ENCODE measurements at regions of chr19 and their contacts with region 1.

Region 1: DNA sequence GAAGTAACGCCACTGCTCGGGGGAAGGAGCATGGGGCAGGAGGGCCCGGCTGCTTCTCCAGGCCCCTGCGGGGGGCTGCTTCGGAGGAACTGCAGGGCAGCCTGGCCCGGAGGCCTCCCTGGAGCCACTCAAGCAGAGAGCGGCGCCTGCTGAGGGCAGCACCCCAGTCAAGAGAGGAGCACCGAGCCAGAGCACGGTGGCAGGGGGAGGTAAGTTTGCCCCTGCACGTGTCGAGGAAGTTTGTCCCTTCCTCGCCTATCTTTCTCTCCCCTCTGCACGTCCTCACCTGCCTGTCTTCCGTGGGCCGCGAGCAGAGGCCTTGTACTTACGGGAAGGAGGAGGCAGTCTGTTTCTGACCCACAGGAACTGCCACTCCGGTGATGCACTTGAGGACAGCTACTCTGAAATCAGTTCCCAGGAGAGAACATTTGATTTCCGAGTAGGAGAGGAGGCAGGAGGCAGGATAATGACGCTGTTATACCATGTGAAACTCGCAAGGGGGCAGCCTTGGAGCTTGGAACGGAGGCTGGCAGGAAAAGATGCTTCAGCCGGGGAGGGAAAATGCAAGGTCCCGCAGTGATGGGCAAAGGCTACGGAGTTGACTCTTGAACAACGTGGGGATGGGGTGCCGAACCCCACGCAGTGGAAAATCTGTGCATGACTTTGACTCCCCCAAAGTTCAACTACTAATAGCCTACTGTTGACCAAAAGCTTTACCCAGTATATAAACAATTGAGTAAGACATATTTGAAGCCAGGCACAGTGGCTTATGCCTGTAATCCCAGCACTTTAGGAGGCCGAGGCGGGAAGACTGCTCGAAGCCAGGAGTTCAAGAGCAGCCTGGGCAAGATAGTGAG is 5.0 kb downstream of the FFAR1 start:
- DNase-seq: peak; percentile 76
- ATAC-seq: peak; percentile 84
- H3K4me3 Mint-ChIP-seq: no peak overlapping the region
- H3K27ac Mint-ChIP-seq: peak overlapping the region; percentile 95
- H3K4me1 Mint-ChIP-seq: peaks cover 5% of the 10 kb centered on the region
- H3K27me3 Mint-ChIP-seq: no peaks in the 10 kb centered on the region
- CTCF ChIP-seq: peak; percentile 58; the same call in 1 of the 2 replicates

Region 2: DNA sequence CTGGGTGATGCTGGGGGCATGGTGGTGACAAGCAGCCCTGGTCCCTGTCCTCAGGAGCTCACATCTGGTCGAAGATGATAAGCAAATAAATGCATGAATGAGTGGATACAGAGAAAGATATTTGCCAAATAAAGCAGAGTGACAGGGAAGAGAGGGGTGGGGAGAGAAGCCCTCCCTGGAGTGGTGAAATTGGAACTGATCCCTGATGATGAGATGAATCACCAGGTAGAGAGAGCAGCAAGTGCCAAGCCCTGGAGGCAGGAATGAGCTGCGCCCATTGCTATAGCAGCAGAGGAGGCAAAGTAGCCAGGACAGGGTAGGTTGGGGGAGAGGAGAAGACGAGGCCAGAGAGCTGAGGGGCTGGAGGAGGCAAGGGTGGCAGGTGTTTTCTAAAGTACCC is 184.5 kb before region 1 on chr19:
- CTCF ChIA-PET with region 1: no interaction called
- POLR2A ChIA-PET with region 1: no interaction called
- DNase-seq: no peak
- ATAC-seq: no peak
- H3K4me3 Mint-ChIP-seq: no peak overlapping the region
- H3K27ac Mint-ChIP-seq: no peak overlapping the region
- H3K4me1 Mint-ChIP-seq: no peaks in the 10 kb centered on the region
- H3K27me3 Mint-ChIP-seq: no peaks in the 10 kb centered on the region
- CTCF ChIP-seq: no peak

Region 3: GRCh38 chr19:35306473-35307246 is 46.0 kb before region 1 on chr19:
- CTCF ChIA-PET with region 1: interaction called, 10 read pairs
- POLR2A ChIA-PET with region 1: no interaction called
- DNase-seq: peak; percentile 52
- ATAC-seq: peak; percentile 87
- H3K4me3 Mint-ChIP-seq: no peak overlapping the region
- H3K27ac Mint-ChIP-seq: no peak overlapping the region
- H3K4me1 Mint-ChIP-seq: no peaks in the 10 kb centered on the region
- H3K27me3 Mint-ChIP-seq: no peaks in the 10 kb centered on the region; the same call in 1 of the 2 replicates
- CTCF ChIP-seq: peak; percentile 37; the same call in 1 of the 2 replicates

Region 4: DNA sequence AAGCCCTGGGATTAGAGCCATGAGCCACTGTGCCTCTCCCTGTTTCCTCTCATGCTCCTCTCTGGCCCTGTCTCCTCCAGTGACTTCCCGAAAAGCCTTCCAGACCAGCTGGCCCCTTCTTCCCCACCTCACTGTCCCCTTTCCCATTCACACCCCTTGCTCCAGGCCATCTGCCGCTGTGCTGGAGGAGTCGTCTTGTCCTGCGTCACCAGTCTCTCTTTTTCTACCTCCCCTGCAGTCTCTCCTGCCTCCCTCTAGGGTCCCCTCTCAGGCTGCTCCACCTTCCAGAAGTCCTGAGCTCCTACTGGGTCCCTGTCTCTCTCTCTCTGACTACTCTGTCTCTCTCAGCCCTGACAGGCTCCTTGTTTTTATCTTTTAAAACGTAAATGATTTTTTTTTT is 10.2 kb before region 1 on chr19:
- CTCF ChIA-PET with region 1: interaction called, 12 read pairs
- POLR2A ChIA-PET with region 1: no interaction called
- DNase-seq: no peak
- ATAC-seq: peak; percentile 52
- H3K4me3 Mint-ChIP-seq: no peak overlapping the region
- H3K27ac Mint-ChIP-seq: no peak overlapping the region
- H3K4me1 Mint-ChIP-seq: 0 out of 2 replicates have a peak, but pooled peaks cover 2% of the 10 kb centered on the region
- H3K27me3 Mint-ChIP-seq: no peaks in the 10 kb centered on the region; the same call in 1 of the 2 replicates
- CTCF ChIP-seq: no peak

Region 5: GRCh38 chr19:35468637-35469036 is 116.0 kb after region 1 on chr19:
- CTCF ChIA-PET with region 1: interaction called, 13 read pairs
- POLR2A ChIA-PET with region 1: no interaction called
- DNase-seq: peak; percentile 60
- ATAC-seq: peak; percentile 98
- H3K4me3 Mint-ChIP-seq: no peak overlapping the region
- H3K27ac Mint-ChIP-seq: no peak overlapping the region
- H3K4me1 Mint-ChIP-seq: peaks cover 13% of the 10 kb centered on the region
- H3K27me3 Mint-ChIP-seq: no peaks in the 10 kb centered on the region
- CTCF ChIP-seq: peak; percentile 42; the same call in 1 of the 2 replicates

Region 6: DNA sequence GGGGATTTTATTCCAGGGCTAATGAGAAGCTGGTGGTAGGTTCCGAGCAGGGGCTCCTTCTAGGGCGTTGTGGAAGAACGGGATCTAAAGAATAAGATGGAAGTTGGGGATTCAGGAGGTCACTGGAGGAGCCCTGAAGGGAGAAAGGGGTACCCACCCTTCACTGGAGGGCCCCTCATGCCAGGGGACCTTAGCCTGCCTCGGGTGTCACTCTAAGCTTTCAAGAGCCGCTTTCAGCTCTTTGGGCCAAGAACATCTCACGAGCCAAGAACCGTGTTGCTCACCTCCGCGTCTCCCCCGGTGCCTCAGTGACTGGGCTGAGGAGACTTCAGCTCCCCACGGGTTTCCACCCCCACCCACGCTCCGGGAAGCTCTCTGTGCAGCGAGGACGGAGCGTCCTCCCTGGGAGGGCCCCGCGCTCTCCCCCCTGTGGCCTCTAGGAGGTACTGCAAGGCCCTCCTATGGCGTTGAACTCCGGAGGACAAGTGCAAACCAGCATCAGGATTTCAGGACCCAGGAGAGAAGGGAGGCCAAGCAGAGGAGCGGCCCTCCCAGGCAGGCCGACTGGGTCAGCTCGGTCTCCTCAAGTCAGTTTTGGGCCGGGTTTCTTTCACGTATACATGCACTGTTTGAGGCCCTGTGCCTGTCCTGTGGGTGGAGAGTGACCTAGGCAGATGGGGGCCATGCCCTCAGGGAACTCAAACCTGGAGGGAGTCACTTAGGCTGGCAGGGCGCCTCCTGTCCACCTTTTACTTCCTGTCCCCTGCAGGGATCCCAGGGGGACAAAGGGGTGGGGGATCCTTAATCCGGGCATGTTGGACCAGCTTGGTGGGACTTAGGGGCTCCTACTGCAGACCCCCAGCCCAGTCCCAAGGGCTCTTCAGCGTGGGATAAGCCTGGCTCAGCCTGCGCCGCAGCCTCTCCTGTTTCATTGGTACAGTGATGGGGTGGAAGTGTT is 142.7 kb after region 1 on chr19:
- CTCF ChIA-PET with region 1: interaction called, 24 read pairs
- POLR2A ChIA-PET with region 1: interaction called, 3 read pairs
- DNase-seq: peak; percentile 68
- ATAC-seq: peak; percentile 92
- H3K4me3 Mint-ChIP-seq: no peak overlapping the region
- H3K27ac Mint-ChIP-seq: peak overlapping the region; percentile 52; the same call in 1 of the 2 replicates
- H3K4me1 Mint-ChIP-seq: peaks cover 9% of the 10 kb centered on the region
- H3K27me3 Mint-ChIP-seq: peaks cover 13% of the 10 kb centered on the region
- CTCF ChIP-seq: peak; percentile 91

Measured in WTC11 (cell line).